ENCODE measurements at regions of chr2 and their contacts with region 1.

Region 1: GRCh38 chr2:20650880-20651730 is at the start of gene HS1BP3:
- DNase-seq: peak; percentile 92
- H3K4me3 Mint-ChIP-seq: peak within 1 kb of the TSS; percentile 91
- H3K27ac Mint-ChIP-seq: peak within 1 kb of the TSS; percentile 89
- H3K4me1 Mint-ChIP-seq: peaks cover 30% of the 10 kb centered on the region
- H3K27me3 Mint-ChIP-seq: peaks cover 12% of the 10 kb centered on the region
- total RNA-seq, gene HS1BP3: 17.2 to 19.4 TPM

Region 2: GRCh38 chr2:20350753-20351554 is 300.2 kb before region 1 on chr2 and contains the start of gene PUM2:
- CTCF ChIA-PET with region 1: interaction called, 3 read pairs
- POLR2A ChIA-PET with region 1: interaction called, 11 read pairs
- DNase-seq: peak; percentile 97
- H3K4me3 Mint-ChIP-seq: no peak within 1 kb of the TSS
- H3K27ac Mint-ChIP-seq: peak within 1 kb of the TSS; percentile 80
- H3K4me1 Mint-ChIP-seq: peaks cover 38% of the 10 kb centered on the region
- H3K27me3 Mint-ChIP-seq: no peaks in the 10 kb centered on the region
- total RNA-seq, gene PUM2: 141 to 147 TPM

Region 3: DNA sequence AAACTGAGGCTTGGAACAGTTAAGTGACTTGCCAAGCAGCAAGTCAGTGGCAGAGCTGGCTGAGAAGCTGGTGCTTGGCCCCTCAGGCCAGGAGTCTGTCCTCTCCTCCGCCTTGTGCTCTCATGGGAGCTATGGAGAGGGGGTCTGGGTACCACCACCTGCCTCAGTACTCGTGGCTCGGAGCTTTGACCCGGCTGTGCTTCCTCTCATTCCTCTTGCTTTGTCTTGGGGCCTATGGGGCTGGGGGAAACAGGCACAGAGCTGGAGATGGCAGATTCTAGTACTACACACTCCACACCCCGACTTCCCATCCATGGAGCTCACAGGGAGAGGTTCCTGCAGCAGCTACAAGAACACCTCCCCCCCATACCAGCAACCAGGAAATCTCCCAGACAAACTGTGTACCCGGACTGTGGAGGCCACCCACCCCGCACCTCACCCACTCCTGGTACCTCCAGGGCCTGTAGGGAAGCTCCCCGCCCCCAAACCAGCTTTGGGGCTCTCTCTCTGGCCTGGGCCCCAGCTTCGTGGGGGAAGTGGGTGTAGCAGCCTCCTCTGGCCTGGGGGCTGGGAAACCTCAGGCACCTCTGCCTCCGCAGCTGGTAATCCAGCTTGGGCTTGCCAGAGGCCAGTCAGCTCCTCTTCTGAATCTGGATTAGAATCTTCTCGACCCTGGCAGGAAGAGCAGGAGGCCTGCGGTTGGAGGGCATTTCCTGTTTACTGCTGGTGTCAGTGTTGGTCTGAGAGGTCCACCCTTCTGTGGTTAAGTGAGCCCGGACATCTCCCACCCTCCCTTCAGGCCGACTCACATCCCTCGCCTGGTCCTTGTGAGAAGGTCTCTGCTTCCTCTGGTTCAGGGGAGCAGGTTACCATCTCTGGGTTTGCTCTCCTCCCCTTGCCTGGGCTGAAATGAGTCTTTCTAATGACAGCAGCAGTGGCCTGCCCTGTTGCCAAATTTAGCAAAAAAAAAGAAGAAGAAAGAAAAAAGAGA is 226.5 kb before region 1 on chr2:
- CTCF ChIA-PET with region 1: interaction called, 23 read pairs
- POLR2A ChIA-PET with region 1: interaction called, 6 read pairs
- DNase-seq: peak; percentile 58
- H3K4me3 Mint-ChIP-seq: peak overlapping the region; percentile 3
- H3K27ac Mint-ChIP-seq: peak overlapping the region; percentile 68
- H3K4me1 Mint-ChIP-seq: peaks cover 44% of the 10 kb centered on the region
- H3K27me3 Mint-ChIP-seq: peaks cover 4% of the 10 kb centered on the region

Region 4: DNA sequence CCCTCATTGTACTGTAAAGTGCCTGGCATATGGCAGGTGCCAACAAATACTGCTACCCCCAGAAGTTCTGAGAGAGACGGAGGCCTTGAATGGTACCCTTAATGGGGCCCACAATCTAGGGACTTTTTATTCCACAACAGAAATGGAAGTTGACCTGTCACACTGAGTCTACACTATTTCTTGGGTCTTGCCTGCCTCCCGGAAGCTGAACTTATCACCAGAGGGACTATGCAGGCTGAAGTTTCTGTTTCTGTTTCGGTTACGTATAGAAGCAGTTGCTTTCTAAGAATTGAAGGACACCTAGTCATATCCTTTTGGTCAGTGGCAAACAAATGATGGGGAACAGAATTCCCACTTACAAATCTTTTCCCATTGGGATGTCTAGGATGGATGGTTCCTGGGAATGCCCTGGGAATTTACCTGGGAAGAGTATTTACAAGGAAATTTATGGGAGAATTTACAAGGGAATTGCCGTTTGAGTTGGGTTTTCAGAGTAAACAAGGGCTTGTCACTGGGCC is 74.4 kb before region 1 on chr2:
- CTCF ChIA-PET with region 1: interaction called, 4 read pairs
- POLR2A ChIA-PET with region 1: interaction called, 11 read pairs
- DNase-seq: peak; percentile 60
- H3K4me3 Mint-ChIP-seq: peak overlapping the region; percentile 65
- H3K27ac Mint-ChIP-seq: peak overlapping the region; percentile 97
- H3K4me1 Mint-ChIP-seq: peaks cover 78% of the 10 kb centered on the region
- H3K27me3 Mint-ChIP-seq: no peaks in the 10 kb centered on the region

Region 5: GRCh38 chr2:20635675-20636584 is 15.2 kb before region 1 on chr2:
- CTCF ChIA-PET with region 1: interaction called, 10 read pairs
- POLR2A ChIA-PET with region 1: interaction called, 4 read pairs
- DNase-seq: peak; percentile 53
- H3K4me3 Mint-ChIP-seq: no peak overlapping the region
- H3K27ac Mint-ChIP-seq: no peak overlapping the region
- H3K4me1 Mint-ChIP-seq: peaks cover 5% of the 10 kb centered on the region
- H3K27me3 Mint-ChIP-seq: no peaks in the 10 kb centered on the region

Region 6: DNA sequence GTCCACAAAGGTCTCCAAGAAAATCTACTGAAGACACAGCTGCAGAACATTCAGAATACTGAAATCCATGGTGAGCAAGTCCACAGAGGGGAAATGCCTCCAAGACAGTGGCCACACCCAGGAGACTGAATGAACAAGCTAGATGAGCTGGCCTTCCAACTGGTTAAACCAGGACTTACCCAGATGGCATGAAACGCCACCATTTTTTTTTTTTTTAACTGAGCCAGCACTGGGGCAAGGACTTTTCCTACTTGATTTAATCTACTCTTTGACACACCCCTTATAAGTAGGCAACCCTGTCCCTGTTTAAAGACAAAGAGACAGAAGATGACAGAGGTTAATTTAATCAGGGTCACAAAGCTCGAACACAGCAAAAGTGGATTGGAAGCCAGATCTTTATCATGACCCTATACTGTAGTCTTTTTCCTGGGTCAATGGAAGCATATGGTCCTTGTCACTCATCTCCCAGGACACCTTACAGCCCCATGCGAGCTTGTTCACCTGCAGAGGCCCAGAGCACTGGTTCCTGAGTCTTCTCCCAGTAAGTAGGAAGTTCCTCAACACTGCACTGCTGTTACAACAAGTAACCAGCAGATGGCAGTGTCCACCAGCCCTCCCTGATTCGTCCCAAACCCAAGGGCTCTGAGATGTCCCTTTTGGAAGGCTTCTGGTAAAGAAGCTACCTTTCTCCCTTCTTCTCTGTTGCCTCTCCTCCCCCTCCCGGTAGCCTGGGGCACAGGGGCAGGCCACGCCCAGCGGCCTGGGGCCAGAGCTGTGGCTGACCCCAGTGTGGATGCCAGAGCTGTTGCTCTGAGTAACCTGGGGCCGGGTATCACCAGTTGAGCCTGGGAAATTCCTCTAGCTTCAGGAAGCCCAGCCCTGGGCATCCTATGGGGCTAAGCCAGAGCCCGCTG is 10.2 kb after region 1 on chr2:
- CTCF ChIA-PET with region 1: interaction called, 59 read pairs
- POLR2A ChIA-PET with region 1: interaction called, 16 read pairs
- DNase-seq: peak; percentile 74
- H3K4me3 Mint-ChIP-seq: no peak overlapping the region
- H3K27ac Mint-ChIP-seq: no peak overlapping the region
- H3K4me1 Mint-ChIP-seq: peaks cover 10% of the 10 kb centered on the region
- H3K27me3 Mint-ChIP-seq: peaks cover 77% of the 10 kb centered on the region

Region 7: GRCh38 chr2:20684581-20685063 is 33.5 kb after region 1 on chr2:
- CTCF ChIA-PET with region 1: no interaction called
- POLR2A ChIA-PET with region 1: no interaction called
- DNase-seq: no peak
- H3K4me3 Mint-ChIP-seq: no peak overlapping the region
- H3K27ac Mint-ChIP-seq: no peak overlapping the region
- H3K4me1 Mint-ChIP-seq: peaks cover 17% of the 10 kb centered on the region
- H3K27me3 Mint-ChIP-seq: no peaks in the 10 kb centered on the region

Region 8: DNA sequence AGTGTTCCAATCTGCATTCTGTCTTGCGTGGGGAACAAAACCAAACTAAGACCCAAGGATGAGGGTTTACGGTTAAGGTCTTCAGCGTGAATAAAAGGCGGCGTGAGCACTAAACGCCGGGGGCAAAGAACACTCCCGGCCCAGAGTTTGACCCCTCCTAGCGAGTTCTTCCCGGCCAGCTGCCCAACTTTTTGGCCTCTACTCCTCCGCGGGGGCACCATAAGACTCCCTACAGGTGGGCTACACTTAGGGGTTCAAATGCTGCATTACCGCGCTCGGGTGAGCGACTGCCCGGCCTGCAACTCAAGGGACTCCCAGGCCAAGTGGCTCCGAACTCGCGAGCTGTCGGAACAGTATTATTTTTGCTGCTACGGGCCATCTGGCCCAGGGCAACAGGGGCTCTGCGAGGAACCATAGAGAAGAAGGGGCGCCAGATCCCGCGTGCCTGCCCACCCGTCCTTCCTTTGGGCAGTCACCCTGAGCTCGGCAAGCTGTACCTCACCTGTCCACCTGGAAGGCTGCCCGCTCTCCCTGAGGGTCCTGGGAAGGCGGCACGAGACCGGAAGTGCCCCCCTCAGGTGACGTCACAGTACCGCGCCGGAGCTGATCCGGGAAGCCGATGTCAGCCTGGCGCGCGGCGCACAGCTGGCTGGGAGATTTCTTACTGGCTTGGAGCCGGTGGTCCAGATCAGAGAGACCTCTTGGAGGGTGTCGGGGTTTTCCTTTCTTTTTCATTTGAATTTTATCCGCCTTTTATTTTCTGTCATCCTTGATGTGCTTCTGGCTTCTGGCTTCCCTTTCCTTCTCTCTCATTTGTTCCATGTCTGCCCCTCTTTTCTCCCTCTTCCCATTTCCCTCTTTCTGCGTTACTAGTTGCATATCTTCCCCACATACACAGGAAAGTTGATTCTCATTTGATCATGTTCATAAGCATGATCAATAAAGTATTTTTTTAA is 171.7 kb after region 1 on chr2 and contains the start of gene LDAH:
- CTCF ChIA-PET with region 1: interaction called, 6 read pairs
- POLR2A ChIA-PET with region 1: interaction called, 28 read pairs
- DNase-seq: peak; percentile 85
- H3K4me3 Mint-ChIP-seq: peak within 1 kb of the TSS; percentile 97
- H3K27ac Mint-ChIP-seq: peak within 1 kb of the TSS; percentile 97
- H3K4me1 Mint-ChIP-seq: peaks cover 29% of the 10 kb centered on the region
- H3K27me3 Mint-ChIP-seq: no peaks in the 10 kb centered on the region
- total RNA-seq, gene LDAH: 26.4 to 28.1 TPM

Measured in activated CD4-positive, alpha-beta memory T cell treated with anti-CD3 and anti-CD28 coated beads, Interleukin-2, amount 10 ng/mL, durations not matched to agents 7 days and 5 days (primary cell).